Heart left ventricle (tissue), 16 donors: ENCODE measurements at regions of chr10 and their contacts with region 1.

Region 1: GRCh38 chr10:15719899-15720634 is at the start of gene ITGA8:
- DNase-seq: peak in 4 of 5 donors; percentile 28 to 66 (median 32)
- ATAC-seq: peak in 3 of 4 donors; percentile 62 to 72 (median 70)
- H3K4me3 ChIP-seq: peak within 1 kb of the TSS; percentile 32 to 74 (median 50)
- H3K27ac ChIP-seq: peak within 1 kb of the TSS in 3 of 12 donors; percentile 6 to 68 (median 49)
- H3K4me1 ChIP-seq: peaks cover 0 to 19% (median 5%) of the 10 kb centered on the region in 12 donors
- H3K27me3 ChIP-seq: peaks cover 8 to 44% (median 26%) of the 10 kb centered on the region in 9 donors
- CTCF ChIP-seq: peak in 10 of 12 donors; percentile 19 to 56 (median 32)
- POLR2A ChIP-seq: no peak
- total RNA-seq, gene ITGA8: 0.50 to 4.3 (median 1.5) TPM

Region 2: DNA sequence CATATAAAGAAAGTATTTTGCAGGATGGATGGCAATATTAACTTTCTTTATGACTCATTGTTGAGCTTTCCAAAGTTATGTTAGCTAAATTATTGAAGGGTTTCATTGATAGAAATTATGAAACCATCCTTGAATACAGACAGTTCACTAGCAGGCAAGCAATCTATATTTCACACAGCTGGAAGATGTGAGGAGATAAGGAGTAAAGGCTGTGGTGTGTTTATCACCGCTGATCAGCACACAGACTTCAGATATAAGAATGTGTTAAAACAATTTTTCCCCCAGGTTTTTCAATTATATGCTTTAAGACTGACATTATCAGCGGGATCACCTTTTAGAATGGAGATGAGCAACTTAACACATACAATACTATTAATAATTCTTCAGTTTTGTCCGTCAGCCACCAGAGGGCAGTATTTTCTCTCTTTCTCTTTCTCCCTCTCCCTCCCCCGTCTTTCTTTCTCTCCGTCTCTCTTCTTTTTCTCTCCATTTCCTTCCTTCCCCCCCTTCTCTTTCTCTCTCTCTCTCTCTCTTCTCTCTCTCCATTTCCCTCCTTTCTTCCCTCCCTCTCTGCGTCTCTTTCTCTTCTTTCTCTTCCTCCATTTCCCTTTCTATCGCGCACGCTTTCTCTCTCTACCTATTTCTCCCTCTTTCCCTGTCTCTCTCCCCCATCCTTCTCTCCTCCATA is 286.1 kb before region 1 on chr10:
- intact Hi-C with region 1: loop called (anchors 2 to 5 kb)
- DNase-seq: peak in 2 of 5 donors; percentile 33 to 34
- ATAC-seq: peak; percentile 32 to 73 (median 63)
- H3K4me3 ChIP-seq: peak overlapping the region in 10 of 12 donors; percentile 25 to 57 (median 42)
- H3K27ac ChIP-seq: no peak overlapping the region
- H3K4me1 ChIP-seq: peaks cover 0 to 7% (median 2%) of the 10 kb centered on the region in 12 donors
- H3K27me3 ChIP-seq: no peaks in the 10 kb centered on the region
- CTCF ChIP-seq: peak; percentile 63 to 82 (median 74)
- POLR2A ChIP-seq: no peak

Region 3: GRCh38 chr10:15439341-15439842 is 280.7 kb before region 1 on chr10:
- intact Hi-C with region 1: loop called (anchors 2 to 5 kb)
- DNase-seq: peak; percentile 53 to 71 (median 59)
- ATAC-seq: peak; percentile 75 to 97 (median 92)
- H3K4me3 ChIP-seq: peak overlapping the region in 10 of 12 donors; percentile 21 to 51 (median 36)
- H3K27ac ChIP-seq: peak overlapping the region; percentile 26 to 80 (median 60)
- H3K4me1 ChIP-seq: peaks cover 0 to 16% (median 6%) of the 10 kb centered on the region in 12 donors
- H3K27me3 ChIP-seq: no peaks in the 10 kb centered on the region
- CTCF ChIP-seq: peak in 9 of 12 donors; percentile 7 to 60 (median 38)
- POLR2A ChIP-seq: peak in 1 of 2 donors; percentile 18

Region 4: GRCh38 chr10:15813415-15813814 is 93.3 kb after region 1 on chr10:
- intact Hi-C with region 1: loop called in 1 of 10 experiments (anchors 5 kb)
- DNase-seq: no peak
- ATAC-seq: peak in 2 of 4 donors; percentile 24 to 36
- H3K4me3 ChIP-seq: no peak overlapping the region
- H3K27ac ChIP-seq: no peak overlapping the region
- H3K4me1 ChIP-seq: peaks cover 0 to 31% (median 5%) of the 10 kb centered on the region in 12 donors
- H3K27me3 ChIP-seq: no peaks in the 10 kb centered on the region
- CTCF ChIP-seq: no peak
- POLR2A ChIP-seq: no peak